ENCODE measurements at regions of chr13 and their contacts with region 1.

Region 1: GRCh38 chr13:70644052-70644451 is 535.8 kb upstream of the KLHL1 start:
- DNase-seq: no peak
- H3K4me3 ChIP-seq: no peak overlapping the region
- H3K27ac ChIP-seq: no peak overlapping the region
- H3K4me1 ChIP-seq: no peaks in the 10 kb centered on the region
- H3K27me3 ChIP-seq: no peaks in the 10 kb centered on the region
- CTCF ChIP-seq: no peak

Region 2: DNA sequence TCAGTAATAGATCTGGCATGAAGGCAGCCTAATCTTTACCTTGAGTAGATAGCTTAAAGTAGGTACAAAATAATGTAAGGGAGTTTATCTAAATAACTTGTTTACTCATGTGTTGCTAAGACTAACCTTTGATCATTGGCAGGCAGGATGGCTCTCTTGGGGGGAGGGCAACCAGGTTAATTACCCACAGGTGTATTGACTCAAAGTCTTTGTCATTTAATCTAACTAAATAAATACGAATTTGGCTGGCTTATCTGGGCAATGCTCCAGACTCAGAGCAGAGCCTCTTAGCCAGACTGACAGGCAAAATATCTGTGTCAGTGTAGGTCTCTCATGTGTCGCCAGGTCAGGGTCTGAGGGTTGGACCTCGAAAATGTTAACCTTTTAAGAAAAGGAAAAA is 252.4 kb before region 1 on chr13:
- CTCF ChIA-PET with region 1: no interaction called
- dilution Hi-C with region 1: no loop called
- in situ Hi-C with region 1: no loop called
- intact Hi-C with region 1: no loop called
- DNase-seq: no peak
- H3K4me3 ChIP-seq: no peak overlapping the region
- H3K27ac ChIP-seq: no peak overlapping the region
- H3K4me1 ChIP-seq: no peaks in the 10 kb centered on the region
- H3K27me3 ChIP-seq: no peaks in the 10 kb centered on the region
- CTCF ChIP-seq: no peak

Region 3: GRCh38 chr13:70613295-70613694 is 30.8 kb before region 1 on chr13:
- CTCF ChIA-PET with region 1: no interaction called
- dilution Hi-C with region 1: loop called (anchors 5 kb)
- in situ Hi-C with region 1: no loop called
- intact Hi-C with region 1: no loop called
- DNase-seq: no peak
- H3K4me3 ChIP-seq: no peak overlapping the region
- H3K27ac ChIP-seq: no peak overlapping the region
- H3K4me1 ChIP-seq: no peaks in the 10 kb centered on the region
- H3K27me3 ChIP-seq: no peaks in the 10 kb centered on the region
- CTCF ChIP-seq: peak; percentile 19 to 38

Measured in mammary epithelial cell (primary cell).